ENCODE measurements at regions of chr2 and their contacts with region 1.

Region 1: GRCh38 chr2:24827321-24828237 is 34.4 kb downstream of the CENPO start:
- DNase-seq: no peak
- H3K4me3 ChIP-seq: no peak overlapping the region
- H3K27ac ChIP-seq: no peak overlapping the region
- H3K4me1 ChIP-seq: peaks cover 8 to 11% (median 10%) of the 10 kb centered on the region in 4 donors
- H3K27me3 ChIP-seq: no peaks in the 10 kb centered on the region
- CTCF ChIP-seq: peak; percentile 81 to 88 (median 83)
- EP300 ChIP-seq: no peak
- POLR2A ChIP-seq: no peak

Region 2: GRCh38 chr2:24360050-24360962 is 467.3 kb before region 1 on chr2 and contains the start of gene ITSN2:
- intact Hi-C with region 1: no loop called
- DNase-seq: peak; percentile 94
- H3K4me3 ChIP-seq: peak within 1 kb of the TSS; percentile 79 to 99 (median 86)
- H3K27ac ChIP-seq: peak within 1 kb of the TSS; percentile 93 to 98 (median 96)
- H3K4me1 ChIP-seq: peaks cover 18 to 41% (median 39%) of the 10 kb centered on the region in 4 donors
- H3K27me3 ChIP-seq: no peaks in the 10 kb centered on the region
- CTCF ChIP-seq: no peak
- EP300 ChIP-seq: no peak
- POLR2A ChIP-seq: no peak
- total RNA-seq, gene ITSN2: 47.0 to 60.2 (median 53.6) TPM

Region 3: GRCh38 chr2:24409700-24410556 is 417.7 kb before region 1 on chr2:
- intact Hi-C with region 1: loop called (anchors 1 kb)
- DNase-seq: no peak
- H3K4me3 ChIP-seq: no peak overlapping the region
- H3K27ac ChIP-seq: no peak overlapping the region
- H3K4me1 ChIP-seq: peaks cover 0 to 4% (median 0%) of the 10 kb centered on the region in 4 donors
- H3K27me3 ChIP-seq: no peaks in the 10 kb centered on the region
- CTCF ChIP-seq: peak; percentile 86 to 89 (median 88)
- EP300 ChIP-seq: no peak
- POLR2A ChIP-seq: no peak

Measured in esophagus muscularis mucosa (tissue), 4 donors.